ENCODE measurements at regions of chr9 and their contacts with region 1.

Region 1: DNA sequence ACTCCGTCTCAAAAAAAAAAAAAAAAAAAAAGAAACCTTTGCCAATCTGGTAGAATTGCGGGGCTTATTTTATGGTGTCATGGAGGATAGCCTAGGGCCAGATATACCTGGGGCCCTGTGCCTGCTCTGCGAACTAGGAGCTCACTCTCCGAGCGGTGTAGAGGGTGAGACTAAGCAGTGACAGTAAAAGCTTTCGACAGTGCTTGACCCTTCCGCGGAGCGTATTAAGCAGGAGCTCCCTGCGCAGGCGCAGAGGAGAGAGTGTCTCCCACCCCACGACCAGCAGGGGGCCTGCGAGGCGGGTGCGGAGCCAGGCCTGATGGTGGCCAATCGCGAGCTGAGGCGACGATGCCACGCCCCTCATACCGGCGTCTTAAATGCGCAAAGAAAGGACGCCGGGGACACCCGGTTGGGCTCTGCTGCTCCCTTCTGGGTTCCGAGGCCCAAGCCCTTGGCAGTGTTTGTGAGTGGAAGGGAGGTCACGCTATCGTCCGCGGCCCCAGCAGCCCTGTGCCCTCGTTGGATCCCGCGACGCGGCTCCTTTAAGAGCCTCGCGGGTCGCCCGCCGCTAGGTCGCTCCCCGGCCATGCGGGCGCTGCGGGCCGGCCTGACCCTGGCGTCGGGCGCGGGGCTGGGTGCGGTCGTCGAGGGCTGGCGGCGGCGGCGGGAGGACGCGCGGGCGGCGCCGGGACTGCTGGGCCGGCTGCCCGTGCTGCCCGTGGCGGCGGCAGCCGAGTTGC is at the start of gene ENDOG:
- DNase-seq: peak; percentile 94
- ATAC-seq: peak; percentile 84
- H3K4me3 ChIP-seq: peak within 1 kb of the TSS; percentile 53 to 85 (median 80)
- H3K27ac ChIP-seq: peak within 1 kb of the TSS; percentile 77
- H3K4me1 ChIP-seq: peaks cover 26% of the 10 kb centered on the region
- H3K27me3 ChIP-seq: no peaks in the 10 kb centered on the region
- CTCF ChIP-seq: peak; percentile 99
- EP300 ChIP-seq: peak in 1 of 2 experiments; percentile 26; a peak in 1 of 4 replicates
- POLR2A ChIP-seq: peak in 1 of 2 experiments; percentile 89; a peak in 2 of 4 replicates
- RAD21 ChIP-seq: peak; percentile 63
- total RNA-seq, gene ENDOG: 26.3 and 28.7 TPM in 2 replicates

Region 2: DNA sequence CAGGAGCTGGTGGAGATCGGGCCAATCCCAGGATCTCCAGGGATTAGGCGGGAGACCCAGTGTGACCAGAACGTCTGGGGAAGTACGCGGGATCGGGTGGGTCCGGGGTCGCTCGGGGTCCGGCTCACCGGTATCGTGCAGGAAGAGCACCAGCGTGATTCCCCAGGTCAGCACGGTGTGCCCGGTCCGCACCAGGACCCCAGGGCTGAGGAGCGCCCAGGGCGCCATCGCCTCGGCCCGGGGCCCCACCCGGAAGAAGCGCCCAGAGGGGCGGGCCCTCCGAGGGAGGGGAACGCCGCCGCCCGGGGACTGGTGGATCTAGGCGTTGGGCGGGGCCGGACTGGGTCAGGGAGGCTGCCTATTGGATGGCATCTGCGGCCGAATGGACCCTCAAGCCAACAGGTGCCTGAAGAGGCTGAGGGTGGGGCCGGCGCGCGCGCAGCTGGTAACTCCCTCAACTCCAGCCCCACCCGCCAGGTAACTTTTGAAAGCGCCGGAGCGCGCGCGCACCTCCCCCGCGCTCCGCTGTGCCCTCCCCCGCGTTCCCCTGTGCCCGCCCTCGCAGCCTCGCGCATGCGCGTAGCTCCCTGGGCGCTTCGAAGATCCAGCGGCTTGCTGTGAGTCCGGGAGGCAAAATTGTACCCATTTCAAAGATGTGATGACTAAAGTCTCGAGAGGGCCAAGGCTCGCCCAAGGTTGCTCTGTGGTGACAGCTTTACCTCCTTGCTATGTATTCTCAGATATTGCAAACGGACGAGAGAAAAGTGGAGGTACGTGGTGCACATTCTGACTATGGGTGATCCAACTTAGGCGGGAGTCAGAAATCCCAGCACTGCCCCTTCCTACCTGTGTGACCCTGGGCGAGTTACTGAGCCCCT is 94.2 kb before region 1 on chr9 and contains the start of gene ZDHHC12:
- CTCF ChIA-PET with region 1: no interaction called
- POLR2A ChIA-PET with region 1: interaction called, 20 read pairs
- in situ Hi-C with region 1: no loop called
- intact Hi-C with region 1: no loop called
- DNase-seq: peak; percentile 97
- ATAC-seq: peak; percentile 95
- H3K4me3 ChIP-seq: peak within 1 kb of the TSS; percentile 70 to 88 (median 74)
- H3K27ac ChIP-seq: peak within 1 kb of the TSS; percentile 34
- H3K4me1 ChIP-seq: peaks cover 38% of the 10 kb centered on the region
- H3K27me3 ChIP-seq: no peaks in the 10 kb centered on the region
- CTCF ChIP-seq: no peak
- EP300 ChIP-seq: peak in 1 of 2 experiments; percentile 21; a peak in 1 of 4 replicates
- POLR2A ChIP-seq: peak; percentile 78 to 95
- RAD21 ChIP-seq: 0 out of 2 replicates have a peak, but pooled peaks have one; percentile 32
- total RNA-seq, gene ZDHHC12: 18.3 and 28.0 TPM in 2 replicates

Region 3: DNA sequence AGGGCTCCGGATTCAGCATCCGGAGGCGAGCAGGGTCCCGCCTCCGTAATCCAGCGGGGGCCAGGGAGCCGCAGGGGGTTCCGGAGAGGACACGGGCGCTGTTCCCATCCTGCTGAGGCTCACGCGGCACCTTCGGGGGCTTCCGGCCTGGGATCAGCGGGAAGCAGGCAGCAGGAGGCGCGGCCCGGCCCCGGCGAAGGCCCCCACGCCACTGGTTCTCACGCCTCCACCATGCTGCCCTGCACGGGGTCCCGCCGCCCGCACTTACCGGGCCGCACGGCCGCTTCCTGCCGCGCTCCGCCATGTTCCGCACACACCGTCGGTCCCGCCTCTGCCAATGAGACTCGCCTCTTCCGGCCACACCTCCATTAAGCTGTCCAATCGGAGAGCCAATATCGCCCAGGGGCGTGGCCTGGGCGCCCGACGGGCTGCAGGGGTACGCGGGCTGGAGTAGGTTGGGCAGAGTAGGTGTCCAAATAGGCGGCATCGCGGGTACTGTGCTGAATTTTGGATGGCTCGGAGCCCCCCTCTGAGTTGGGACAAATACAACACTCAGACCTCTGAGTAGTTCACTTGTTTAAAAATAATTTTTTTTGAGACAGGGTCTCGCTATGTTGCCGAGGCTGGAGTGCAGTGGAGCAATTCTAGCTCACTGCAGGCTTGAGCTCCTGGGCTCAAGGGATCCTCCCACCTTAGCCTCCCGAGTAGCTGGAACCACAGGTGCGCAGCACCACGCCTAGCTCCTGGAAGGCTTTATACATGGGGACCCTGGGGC is 11.4 kb after region 1 on chr9 and contains the start of gene SPOUT1:
- CTCF ChIA-PET with region 1: no interaction called
- POLR2A ChIA-PET with region 1: interaction called, 46 read pairs
- in situ Hi-C with region 1: no loop called
- intact Hi-C with region 1: no loop called
- DNase-seq: peak; percentile 84
- ATAC-seq: peak; percentile 95
- H3K4me3 ChIP-seq: peak within 1 kb of the TSS; percentile 75 to 86 (median 78)
- H3K27ac ChIP-seq: peak within 1 kb of the TSS; percentile 66
- H3K4me1 ChIP-seq: peaks cover 22% of the 10 kb centered on the region
- H3K27me3 ChIP-seq: no peaks in the 10 kb centered on the region
- CTCF ChIP-seq: no peak
- EP300 ChIP-seq: no peak
- POLR2A ChIP-seq: peak; percentile 77 to 83
- RAD21 ChIP-seq: peak; percentile 61
- total RNA-seq, gene SPOUT1: 39.0 and 39.7 TPM in 2 replicates

Region 4: GRCh38 chr9:128838338-128838737 is 20.1 kb after region 1 on chr9:
- CTCF ChIA-PET with region 1: no interaction called
- POLR2A ChIA-PET with region 1: interaction called, 12 read pairs
- in situ Hi-C with region 1: no loop called
- intact Hi-C with region 1: no loop called
- DNase-seq: peak; percentile 96
- ATAC-seq: peak; percentile 95
- H3K4me3 ChIP-seq: peak overlapping the region in 1 of 3 experiments; percentile 33; a peak in 1 of 6 replicates
- H3K27ac ChIP-seq: peak overlapping the region; percentile 84
- H3K4me1 ChIP-seq: peaks cover 70% of the 10 kb centered on the region
- H3K27me3 ChIP-seq: no peaks in the 10 kb centered on the region
- CTCF ChIP-seq: no peak
- EP300 ChIP-seq: peak; percentile 72 to 88; a peak in 2 of 4 replicates
- POLR2A ChIP-seq: no peak
- RAD21 ChIP-seq: peak; percentile 30; the same call in 1 of the 2 replicates

Region 5: GRCh38 chr9:128845155-128845931 is 27.1 kb after region 1 on chr9:
- CTCF ChIA-PET with region 1: no interaction called
- POLR2A ChIA-PET with region 1: interaction called, 12 read pairs
- in situ Hi-C with region 1: no loop called
- intact Hi-C with region 1: no loop called
- DNase-seq: peak; percentile 50
- ATAC-seq: peak; percentile 87
- H3K4me3 ChIP-seq: no peak overlapping the region; a peak in 1 of 6 replicates
- H3K27ac ChIP-seq: peak overlapping the region; percentile 55
- H3K4me1 ChIP-seq: peaks cover 66% of the 10 kb centered on the region
- H3K27me3 ChIP-seq: no peaks in the 10 kb centered on the region
- CTCF ChIP-seq: peak; percentile 43
- EP300 ChIP-seq: no peak
- POLR2A ChIP-seq: no peak
- RAD21 ChIP-seq: 0 out of 2 replicates have a peak, but pooled peaks have one; percentile 17

Region 6: GRCh38 chr9:128927731-128928411 is 109.6 kb after region 1 on chr9:
- CTCF ChIA-PET with region 1: no interaction called
- POLR2A ChIA-PET with region 1: no interaction called
- in situ Hi-C with region 1: no loop called
- intact Hi-C with region 1: no loop called
- DNase-seq: no peak
- ATAC-seq: peak; percentile 89
- H3K4me3 ChIP-seq: no peak overlapping the region
- H3K27ac ChIP-seq: no peak overlapping the region
- H3K4me1 ChIP-seq: peaks cover 17% of the 10 kb centered on the region
- H3K27me3 ChIP-seq: no peaks in the 10 kb centered on the region
- CTCF ChIP-seq: peak; percentile 96
- EP300 ChIP-seq: no peak
- POLR2A ChIP-seq: no peak
- RAD21 ChIP-seq: peak; percentile 92

Measured in HepG2 (cell line).